ENCODE measurements at regions of chr20 and their contacts with region 1.

Region 1: DNA sequence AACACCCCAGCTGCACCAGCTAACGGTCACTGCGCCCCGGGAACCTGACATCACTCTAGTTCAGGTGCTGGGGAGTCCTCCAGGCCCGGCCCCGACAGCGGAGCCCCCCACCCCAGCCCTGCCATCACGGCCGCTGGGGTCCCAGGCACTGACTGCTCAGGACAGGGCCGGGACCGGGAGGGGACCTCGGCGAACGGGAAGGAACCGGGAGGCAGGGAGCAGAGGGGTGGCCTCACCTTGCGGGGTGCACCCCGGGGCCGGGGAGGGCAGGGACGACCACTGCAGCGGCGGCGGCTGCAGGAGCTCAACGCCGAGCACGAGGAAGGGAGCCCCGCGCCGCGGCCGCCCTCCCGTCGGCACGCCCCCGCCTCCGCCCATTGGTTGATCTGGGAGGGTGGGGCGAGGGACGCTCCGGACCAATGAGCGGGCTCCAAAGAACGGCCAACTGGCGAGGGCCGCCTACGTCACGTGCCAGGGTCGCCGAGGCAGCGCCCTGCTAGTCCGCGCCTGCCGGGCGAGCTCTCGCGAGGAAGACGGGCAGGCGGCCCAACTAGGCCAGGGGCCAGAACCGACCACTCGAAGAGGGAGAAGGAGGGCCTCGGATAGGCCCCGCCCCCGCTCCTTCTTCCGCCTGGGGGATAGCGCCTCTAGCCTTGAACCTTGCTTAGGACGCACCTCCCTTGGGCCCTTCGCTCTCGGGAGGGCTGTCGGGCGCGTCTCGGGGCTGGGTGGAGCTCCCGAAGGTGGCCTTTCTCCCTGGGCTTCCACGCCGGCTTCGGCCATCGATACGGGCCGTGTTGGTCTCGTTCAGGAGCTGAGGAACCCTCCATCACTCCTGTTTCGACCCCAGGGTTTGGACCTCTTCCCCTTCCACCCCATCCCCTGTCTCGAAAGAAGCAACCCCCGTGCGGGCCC is at the start of gene ADISSP:
- DNase-seq: peak; percentile 95
- ATAC-seq: peak; percentile 86
- H3K4me3 Mint-ChIP-seq: peak within 1 kb of the TSS; percentile 90
- H3K27ac Mint-ChIP-seq: peak within 1 kb of the TSS; percentile 94
- H3K4me1 Mint-ChIP-seq: peaks cover 26% of the 10 kb centered on the region
- H3K27me3 Mint-ChIP-seq: peaks cover 3% of the 10 kb centered on the region
- CTCF ChIP-seq: no peak
- total RNA-seq, gene ADISSP: 29.9 and 31.1 TPM in 2 replicates

Region 2: GRCh38 chr20:3045816-3046676 is 721.6 kb before region 1 on chr20 and contains the start of gene MRPS26:
- CTCF ChIA-PET with region 1: no interaction called
- POLR2A ChIA-PET with region 1: no interaction called
- intact Hi-C with region 1: loop called (anchors 5 kb)
- DNase-seq: peak; percentile 88
- ATAC-seq: peak; percentile 91
- H3K4me3 Mint-ChIP-seq: peak within 1 kb of the TSS; percentile 84
- H3K27ac Mint-ChIP-seq: peak within 1 kb of the TSS; percentile 89
- H3K4me1 Mint-ChIP-seq: peaks cover 14% of the 10 kb centered on the region
- H3K27me3 Mint-ChIP-seq: no peaks in the 10 kb centered on the region
- CTCF ChIP-seq: no peak
- total RNA-seq, gene MRPS26: 30.6 and 34.7 TPM in 2 replicates

Region 3: DNA sequence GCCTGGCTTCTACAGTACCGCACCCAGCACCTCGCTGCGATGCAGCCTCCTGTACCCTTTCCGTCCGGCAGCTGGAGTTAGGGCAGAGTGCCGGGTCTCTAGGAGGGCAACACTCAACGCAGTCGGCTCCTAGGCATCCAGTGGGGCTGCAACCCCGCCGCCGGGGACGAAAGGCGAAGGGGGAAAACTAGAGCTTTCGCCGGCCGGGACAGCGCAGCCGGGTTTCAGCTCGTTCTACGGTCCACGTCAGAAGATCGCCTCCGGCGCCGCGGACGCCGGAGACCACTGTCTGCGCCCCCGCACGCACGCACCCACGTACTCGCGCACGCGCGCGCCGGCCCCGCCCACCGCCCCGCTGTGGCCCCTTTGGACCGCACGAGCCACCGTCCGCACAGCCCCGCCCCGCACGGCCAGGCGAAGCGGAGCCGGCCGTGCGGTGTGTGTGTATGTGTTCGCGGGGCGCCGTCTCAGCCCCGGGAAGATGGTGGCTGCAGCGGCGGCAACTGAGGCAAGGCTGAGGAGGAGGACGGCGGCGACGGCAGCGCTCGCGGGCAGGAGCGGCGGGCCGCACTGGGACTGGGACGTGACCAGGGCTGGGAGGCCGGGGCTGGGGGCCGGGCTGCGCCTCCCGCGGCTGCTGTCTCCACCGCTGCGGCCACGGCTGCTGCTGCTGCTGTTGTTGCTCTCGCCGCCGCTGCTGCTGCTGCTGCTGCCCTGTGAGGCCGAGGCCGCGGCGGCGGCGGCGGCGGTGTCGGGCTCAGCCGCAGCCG is 296.9 kb before region 1 on chr20 and contains the start of gene ATRN:
- CTCF ChIA-PET with region 1: no interaction called
- POLR2A ChIA-PET with region 1: no interaction called
- intact Hi-C with region 1: loop called (anchors 5 kb)
- DNase-seq: peak; percentile 98
- ATAC-seq: peak; percentile 94
- H3K4me3 Mint-ChIP-seq: peak within 1 kb of the TSS; percentile 93
- H3K27ac Mint-ChIP-seq: peak within 1 kb of the TSS; percentile 64
- H3K4me1 Mint-ChIP-seq: peaks cover 32% of the 10 kb centered on the region
- H3K27me3 Mint-ChIP-seq: peaks cover 1% of the 10 kb centered on the region
- CTCF ChIP-seq: no peak
- total RNA-seq, gene ATRN: 11.5 and 13.0 TPM in 2 replicates

Region 4: DNA sequence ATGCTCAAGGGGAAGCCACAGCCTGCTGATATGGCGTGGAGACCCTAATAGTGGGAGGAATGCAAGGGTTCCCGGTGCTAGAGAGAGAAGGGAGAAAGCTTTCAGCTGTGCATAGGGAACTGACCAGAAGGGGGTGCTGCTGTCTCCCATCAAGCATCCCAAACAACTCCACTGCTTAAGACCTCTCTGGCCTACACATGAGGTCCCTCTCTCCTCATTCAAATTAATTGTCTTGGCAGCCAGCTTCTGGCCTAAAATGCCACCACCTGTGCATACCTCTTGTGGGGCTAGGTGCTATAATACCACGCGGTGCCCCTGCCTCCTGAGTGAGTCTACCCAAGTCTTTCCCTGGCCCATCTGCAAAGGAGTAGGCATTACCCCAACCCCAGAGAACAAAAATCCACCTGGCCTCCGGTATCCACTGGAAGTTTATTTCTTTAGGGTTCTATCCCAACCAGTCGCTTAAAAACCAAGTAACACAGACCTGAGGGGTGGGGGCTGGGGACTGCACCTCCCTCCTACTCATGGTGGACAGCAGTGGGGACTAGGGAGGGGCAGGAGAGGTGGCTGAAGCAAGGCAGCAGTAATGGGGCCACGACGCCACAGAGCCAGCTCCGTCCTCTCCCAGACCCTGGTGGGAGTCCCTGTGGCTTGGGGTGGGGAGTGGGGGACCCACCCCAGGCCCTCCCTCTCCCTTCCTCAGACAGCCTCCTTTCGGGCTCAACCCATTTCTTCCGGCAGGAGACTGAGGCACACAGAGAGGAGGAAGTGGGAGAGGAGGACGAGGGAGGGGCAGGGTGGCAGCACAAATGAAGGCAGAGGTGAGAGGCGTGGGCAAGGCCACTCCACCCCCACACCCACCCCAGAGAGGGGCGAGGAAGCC is 14.3 kb before region 1 on chr20:
- CTCF ChIA-PET with region 1: interaction called, 32 read pairs
- POLR2A ChIA-PET with region 1: interaction called, 6 read pairs
- intact Hi-C with region 1: loop called (anchors 1 kb)
- DNase-seq: no peak
- ATAC-seq: peak; percentile 63
- H3K4me3 Mint-ChIP-seq: peak overlapping the region; percentile 12
- H3K27ac Mint-ChIP-seq: no peak overlapping the region
- H3K4me1 Mint-ChIP-seq: peaks cover 11% of the 10 kb centered on the region
- H3K27me3 Mint-ChIP-seq: no peaks in the 10 kb centered on the region
- CTCF ChIP-seq: no peak

Region 5: DNA sequence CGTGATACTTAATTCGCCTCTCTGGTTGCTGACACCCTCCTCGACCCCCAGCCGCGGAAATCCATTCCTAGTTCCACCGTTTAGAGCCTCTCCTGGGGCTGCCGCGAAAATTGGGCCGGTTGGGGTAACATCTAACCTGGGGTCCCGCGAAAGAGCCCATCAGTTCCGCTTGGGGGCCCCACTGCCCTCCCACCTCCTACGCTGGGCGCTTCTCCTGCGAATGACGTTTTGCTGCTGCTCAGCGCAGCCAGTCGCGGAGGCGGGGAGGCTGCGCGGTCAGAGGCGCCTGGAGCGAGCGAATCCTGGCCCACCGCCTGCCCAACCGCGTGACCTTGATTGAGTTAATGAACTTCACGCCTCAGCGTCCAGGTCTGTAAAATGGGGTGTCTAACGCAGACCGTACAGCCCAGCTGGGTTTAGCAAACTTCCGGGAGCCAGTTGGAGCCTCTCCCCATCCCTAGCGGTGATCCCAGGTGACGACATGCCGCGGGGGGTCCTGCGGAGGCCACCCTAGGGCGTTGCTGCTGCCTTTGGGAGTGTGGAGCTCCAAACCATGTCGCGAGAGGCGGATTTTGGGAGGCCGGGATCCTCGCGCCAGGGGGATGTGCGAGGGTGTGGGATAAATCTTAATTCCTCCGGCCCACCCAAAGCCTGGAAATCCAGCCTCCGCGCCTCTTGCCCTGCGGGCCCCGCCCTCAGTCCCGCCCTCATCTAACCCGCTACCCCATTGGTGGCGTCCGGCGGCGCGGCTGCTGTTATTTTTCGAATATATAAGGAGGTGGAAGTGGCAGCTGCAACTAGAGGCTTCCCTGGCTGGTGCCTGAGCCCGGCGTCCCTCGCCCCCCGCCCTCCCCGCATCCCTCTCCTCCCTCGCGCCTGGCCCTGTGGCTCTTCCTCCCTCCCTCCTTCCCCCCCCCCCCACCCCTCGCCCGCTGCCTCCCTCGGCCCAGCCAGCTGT is 28.1 kb after region 1 on chr20 and contains the start of gene CDC25B:
- CTCF ChIA-PET with region 1: no interaction called
- POLR2A ChIA-PET with region 1: interaction called, 14 read pairs
- intact Hi-C with region 1: loop called (anchors 1 kb)
- DNase-seq: peak; percentile 75
- ATAC-seq: peak; percentile 84
- H3K4me3 Mint-ChIP-seq: peak within 1 kb of the TSS; percentile 92
- H3K27ac Mint-ChIP-seq: peak within 1 kb of the TSS; percentile 95
- H3K4me1 Mint-ChIP-seq: peaks cover 50% of the 10 kb centered on the region
- H3K27me3 Mint-ChIP-seq: no peaks in the 10 kb centered on the region
- CTCF ChIP-seq: no peak
- total RNA-seq, gene CDC25B: 21.6 and 24.3 TPM in 2 replicates

Region 6: DNA sequence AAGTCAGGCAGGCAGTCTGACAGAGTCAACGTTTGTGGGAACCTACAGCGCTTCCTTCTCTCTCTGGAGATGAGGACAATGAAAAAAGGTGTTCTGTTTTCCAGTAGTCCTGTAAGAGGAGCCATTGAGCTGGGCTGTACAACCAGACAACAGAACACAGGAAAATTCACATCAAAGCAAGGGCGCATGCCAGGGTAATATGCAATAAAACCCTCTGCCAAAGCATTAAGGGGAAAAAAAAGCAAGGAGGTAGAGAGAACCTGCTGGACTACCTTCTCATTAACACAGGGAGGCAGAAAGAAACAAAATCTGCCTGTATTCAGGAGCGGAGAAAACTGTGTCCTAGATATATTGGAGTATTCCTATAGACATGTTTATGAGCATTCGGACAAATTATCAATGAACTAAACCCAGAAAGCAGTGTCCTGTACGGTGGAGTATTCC is 246.4 kb after region 1 on chr20:
- CTCF ChIA-PET with region 1: interaction called, 3 read pairs
- POLR2A ChIA-PET with region 1: no interaction called
- intact Hi-C with region 1: loop called (anchors 5 kb)
- DNase-seq: no peak
- ATAC-seq: no peak
- H3K4me3 Mint-ChIP-seq: peak overlapping the region; percentile 83
- H3K27ac Mint-ChIP-seq: no peak overlapping the region
- H3K4me1 Mint-ChIP-seq: peaks cover 33% of the 10 kb centered on the region
- H3K27me3 Mint-ChIP-seq: peaks cover 2% of the 10 kb centered on the region
- CTCF ChIP-seq: no peak